ENCODE measurements at regions of chr2 and their contacts with region 1.

Region 1: DNA sequence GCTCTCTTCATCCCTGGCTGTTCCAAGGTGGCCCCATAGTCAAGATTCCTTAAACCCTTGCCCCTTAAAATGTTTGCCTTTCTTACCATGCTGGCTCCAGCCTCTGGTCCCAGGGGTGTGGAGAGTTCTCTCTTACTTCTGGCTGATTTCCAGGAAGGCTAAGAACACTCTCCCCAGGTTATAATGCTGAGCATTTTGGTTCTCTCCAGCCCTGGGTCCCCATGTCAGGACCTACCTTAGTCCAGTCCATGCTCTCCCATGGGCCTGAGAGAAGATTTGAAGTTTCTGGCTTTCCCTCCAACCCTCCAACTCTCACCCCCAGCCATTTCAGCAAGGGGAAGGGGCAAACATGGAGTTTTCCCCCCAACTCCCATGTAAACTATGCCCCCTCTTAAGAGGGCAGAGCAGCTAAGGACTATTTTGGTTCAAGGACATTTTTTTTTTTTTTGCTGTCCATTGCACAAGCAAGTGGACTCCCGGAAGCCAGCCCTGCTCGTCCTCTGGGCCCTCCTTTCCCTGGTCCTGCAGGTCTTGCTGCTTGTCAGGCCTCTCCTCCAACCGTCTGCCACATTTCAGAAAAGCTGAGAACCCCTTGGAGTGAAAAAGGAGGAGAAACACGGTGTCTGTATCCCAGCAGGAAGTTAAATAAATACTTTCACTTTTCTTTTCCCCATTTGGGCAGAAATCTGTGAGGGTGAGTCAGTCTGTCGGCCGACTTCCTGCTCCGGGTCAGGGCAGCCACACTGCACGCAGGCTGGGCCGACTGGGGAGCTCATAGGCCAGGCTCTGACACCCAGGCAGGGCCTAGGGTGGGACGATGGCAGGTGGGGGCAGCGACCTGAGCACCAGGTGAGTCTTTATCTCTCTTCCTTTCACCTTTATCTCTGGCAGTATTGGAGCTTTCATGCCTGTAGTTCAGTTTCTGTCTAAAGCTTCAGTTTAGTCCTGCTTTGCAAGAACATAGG is at the start of gene SP140L:
- DNase-seq: peak; percentile 84
- H3K4me3 ChIP-seq: peak within 1 kb of the TSS; percentile 69
- H3K27ac ChIP-seq: peak within 1 kb of the TSS; percentile 75
- H3K4me1 ChIP-seq: peaks cover 29% of the 10 kb centered on the region
- CTCF ChIP-seq: no peak
- total RNA-seq, gene SP140L: 7.5 and 10.4 TPM in 2 replicates

Region 2: DNA sequence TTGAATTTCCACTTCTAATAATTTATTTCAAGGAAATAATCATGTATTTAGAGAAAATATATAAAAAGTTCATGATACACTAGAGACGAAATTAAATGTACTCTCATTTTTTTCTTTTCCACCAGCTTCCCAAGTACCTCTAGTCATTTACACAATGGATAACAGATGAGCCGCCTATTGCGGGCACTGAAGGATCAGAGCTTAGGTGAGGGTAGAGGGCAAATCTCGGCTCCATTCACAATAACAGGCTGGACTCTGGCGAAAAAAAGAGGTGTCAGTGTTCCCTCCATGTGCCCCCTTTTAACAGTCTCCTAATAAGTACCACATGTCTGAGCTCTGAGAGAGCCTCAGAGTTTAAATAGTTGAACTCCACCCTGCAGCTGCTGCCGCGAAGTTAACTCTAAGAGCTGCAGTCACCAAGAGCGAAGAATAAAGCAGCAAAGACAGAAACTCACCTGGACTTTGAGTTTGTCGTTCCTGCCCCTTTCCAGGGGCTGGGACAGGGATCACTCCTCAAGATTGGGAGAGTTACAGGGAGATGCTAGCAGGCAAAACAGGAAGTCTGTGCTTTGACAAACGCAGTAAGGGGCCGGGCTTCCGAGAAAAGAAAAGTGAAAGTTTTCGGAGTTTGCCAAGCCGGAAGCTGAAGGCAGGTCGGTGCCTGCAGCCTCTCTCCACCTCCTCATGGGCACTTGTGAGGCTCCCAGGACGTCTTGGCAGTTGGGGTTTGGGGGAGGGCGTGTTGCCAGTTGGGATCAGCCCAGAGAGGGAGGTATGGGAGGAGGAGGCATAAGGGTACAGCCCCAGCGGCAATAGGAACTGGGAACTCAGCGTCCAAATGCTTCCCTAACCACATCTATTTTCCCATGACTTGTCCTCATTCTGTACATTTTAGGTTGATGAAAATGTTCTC is 107.1 kb before region 1 on chr2 and contains the start of gene SP110:
- CTCF ChIA-PET with region 1: no interaction called
- POLR2A ChIA-PET with region 1: interaction called, 3 read pairs
- intact Hi-C with region 1: loop called (anchors 5 kb)
- DNase-seq: peak; percentile 85
- H3K4me3 ChIP-seq: peak within 1 kb of the TSS; percentile 74
- H3K27ac ChIP-seq: peak within 1 kb of the TSS; percentile 36
- H3K4me1 ChIP-seq: peaks cover 60% of the 10 kb centered on the region
- CTCF ChIP-seq: no peak
- total RNA-seq, gene SP110: 15.7 and 15.8 TPM in 2 replicates

Measured in OCI-LY7 (cell line).